ENCODE measurements at regions of chr19 and their contacts with region 1.

Region 1: GRCh38 chr19:13880059-13881043 is 3.4 kb downstream of the NANOS3 start:
- DNase-seq: peak; percentile 94
- H3K4me3 ChIP-seq: peak overlapping the region in 1 of 3 experiments; percentile 15
- H3K27ac ChIP-seq: peak overlapping the region; percentile 59
- H3K4me1 ChIP-seq: peaks cover 38% of the 10 kb centered on the region
- H3K27me3 ChIP-seq: no peaks in the 10 kb centered on the region
- CTCF ChIP-seq: peak; percentile 95 to 99

Region 2: DNA sequence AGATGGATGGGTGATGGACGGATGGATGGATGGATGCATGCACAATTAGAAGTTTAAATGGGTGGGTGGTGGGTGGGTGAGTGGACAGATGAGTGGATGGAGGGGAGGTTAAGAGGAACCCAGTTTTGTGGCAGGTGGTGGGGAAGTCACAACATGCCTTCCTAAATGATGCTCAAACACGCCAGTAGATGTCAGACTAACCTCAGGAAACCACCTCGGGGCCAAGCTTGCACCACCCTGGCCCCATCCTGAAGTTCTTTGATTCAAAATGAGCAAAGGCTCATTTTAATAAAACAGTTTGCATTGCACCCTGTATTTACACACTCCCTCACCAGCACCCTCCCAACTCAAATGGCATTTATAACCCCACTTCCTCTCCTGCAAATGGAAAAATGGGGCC is 282.7 kb before region 1 on chr19:
- CTCF ChIA-PET with region 1: no interaction called
- dilution Hi-C with region 1: no loop called
- in situ Hi-C with region 1: no loop called
- intact Hi-C with region 1: loop called (anchors 5 kb)
- DNase-seq: peak; percentile 50
- H3K4me3 ChIP-seq: no peak overlapping the region
- H3K27ac ChIP-seq: no peak overlapping the region
- H3K4me1 ChIP-seq: no peaks in the 10 kb centered on the region
- H3K27me3 ChIP-seq: no peaks in the 10 kb centered on the region
- CTCF ChIP-seq: peak; percentile 44 to 69

Region 3: GRCh38 chr19:14048443-14049153 is 168.2 kb after region 1 on chr19:
- CTCF ChIA-PET with region 1: no interaction called
- dilution Hi-C with region 1: no loop called
- in situ Hi-C with region 1: no loop called
- intact Hi-C with region 1: loop called (anchors 1 kb)
- DNase-seq: peak; percentile 19
- H3K4me3 ChIP-seq: no peak overlapping the region
- H3K27ac ChIP-seq: no peak overlapping the region
- H3K4me1 ChIP-seq: no peaks in the 10 kb centered on the region
- H3K27me3 ChIP-seq: no peaks in the 10 kb centered on the region
- CTCF ChIP-seq: peak; percentile 85 to 91

Region 4: DNA sequence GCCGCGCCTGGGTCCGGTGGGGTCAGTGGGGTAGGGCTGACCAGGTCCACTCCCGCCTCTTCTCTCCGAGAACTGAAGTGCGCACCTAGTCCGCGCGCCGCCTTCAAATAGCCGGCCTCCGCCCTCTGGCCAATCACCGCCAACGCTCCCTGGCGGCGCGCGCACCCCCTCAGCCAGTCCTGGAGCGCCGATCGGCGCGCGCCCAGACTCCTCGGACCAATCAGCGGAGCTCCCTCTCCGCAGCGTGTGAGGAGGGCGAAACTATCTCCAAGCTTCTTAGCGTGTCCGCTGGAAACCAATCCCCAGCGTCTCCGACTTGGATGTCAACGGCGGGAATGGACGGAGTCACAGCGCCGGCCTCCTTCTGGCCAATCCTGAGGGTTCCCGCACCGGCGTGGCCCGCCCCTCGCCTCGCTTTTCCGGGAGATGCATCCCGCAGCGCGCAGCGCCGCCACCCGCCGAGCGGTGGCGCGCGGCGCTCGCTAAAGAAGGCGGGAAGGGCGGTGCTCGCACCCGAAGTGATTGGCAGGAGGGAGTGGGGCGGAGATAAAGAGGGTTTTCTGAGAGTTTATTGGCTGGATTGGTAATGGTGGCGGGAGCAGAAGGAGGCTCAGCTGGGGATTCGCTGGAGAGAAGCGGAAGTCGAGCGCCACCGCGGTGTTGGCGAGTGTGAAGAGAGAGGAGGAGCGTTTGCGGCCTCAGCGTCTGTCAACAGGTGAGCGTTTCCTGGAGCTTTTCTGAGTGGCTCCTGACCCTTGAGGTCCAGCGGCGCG is 256.3 kb after region 1 on chr19 and contains the start of gene ASF1B:
- CTCF ChIA-PET with region 1: interaction called, 6 read pairs
- dilution Hi-C with region 1: loop called (anchors 5 kb)
- in situ Hi-C with region 1: no loop called
- intact Hi-C with region 1: loop called (anchors 1 kb)
- DNase-seq: peak; percentile 100
- H3K4me3 ChIP-seq: peak within 1 kb of the TSS; percentile 72 to 99 (median 91)
- H3K27ac ChIP-seq: peak within 1 kb of the TSS; percentile 67
- H3K4me1 ChIP-seq: peaks cover 4% of the 10 kb centered on the region
- H3K27me3 ChIP-seq: no peaks in the 10 kb centered on the region
- CTCF ChIP-seq: peak; percentile 60 to 91
- total RNA-seq, gene ASF1B: 2.5 to 23.4 TPM

Region 5: GRCh38 chr19:14354445-14354844 is 474.1 kb after region 1 on chr19:
- CTCF ChIA-PET with region 1: no interaction called
- dilution Hi-C with region 1: loop called (anchors 10 kb)
- in situ Hi-C with region 1: no loop called
- intact Hi-C with region 1: loop called (anchors 2 kb)
- DNase-seq: no peak
- H3K4me3 ChIP-seq: no peak overlapping the region
- H3K27ac ChIP-seq: no peak overlapping the region
- H3K4me1 ChIP-seq: peaks cover 5% of the 10 kb centered on the region
- H3K27me3 ChIP-seq: peaks cover 2% of the 10 kb centered on the region
- CTCF ChIP-seq: no peak

Region 6: GRCh38 chr19:14472202-14472938 is 592.0 kb after region 1 on chr19:
- CTCF ChIA-PET with region 1: no interaction called
- dilution Hi-C with region 1: no loop called
- in situ Hi-C with region 1: no loop called
- intact Hi-C with region 1: loop called (anchors 5 kb)
- DNase-seq: no peak
- H3K4me3 ChIP-seq: no peak overlapping the region
- H3K27ac ChIP-seq: no peak overlapping the region
- H3K4me1 ChIP-seq: peaks cover 28% of the 10 kb centered on the region
- H3K27me3 ChIP-seq: no peaks in the 10 kb centered on the region
- CTCF ChIP-seq: peak; percentile 68 to 93